Right ventricle myocardium superior (tissue), 1 donor: ENCODE measurements at regions of chr20 and their contacts with region 1.

Region 1: DNA sequence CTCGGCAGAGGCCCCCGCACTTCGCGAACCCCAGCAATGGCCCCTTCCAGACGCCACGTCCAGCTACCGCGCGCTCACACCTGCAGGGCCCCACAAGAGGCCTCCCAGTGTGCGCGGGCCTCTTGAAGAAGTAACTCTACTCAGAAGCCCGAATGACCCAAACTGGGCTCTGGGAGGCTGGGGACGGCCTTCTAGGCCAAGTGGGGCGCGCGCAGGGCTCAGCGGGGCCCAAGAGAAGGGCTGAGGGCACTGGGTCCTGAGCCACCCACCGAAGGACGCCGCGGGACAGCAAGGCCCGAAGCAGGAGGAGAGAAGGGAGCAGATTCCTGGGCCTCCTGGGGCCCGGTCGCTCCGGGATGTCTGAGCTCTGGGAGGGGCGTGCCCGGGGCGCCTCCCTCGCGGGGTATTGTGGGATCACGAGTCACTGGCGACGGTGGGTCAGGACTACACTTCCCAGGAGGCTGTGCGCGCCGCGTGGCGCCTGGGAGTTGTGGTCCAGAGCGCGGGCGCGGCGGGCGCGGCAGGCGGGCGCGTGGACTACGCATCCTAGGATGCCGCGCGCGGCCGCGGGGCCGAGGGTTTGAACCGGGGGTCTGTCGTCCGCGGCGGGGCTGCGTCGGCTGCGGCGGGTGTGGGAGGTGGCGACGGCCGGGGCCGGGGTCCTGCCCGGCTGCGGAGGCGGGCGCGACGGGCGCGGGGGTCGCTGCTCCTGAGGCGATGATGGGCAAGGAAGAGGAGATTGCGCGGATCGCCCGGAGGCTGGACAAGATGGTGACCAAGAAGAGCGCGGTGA is at the start of gene TCEA2:
- DNase-seq: peak; percentile 99
- ATAC-seq: peak; percentile 97
- total RNA-seq, gene TCEA2: 34.6 TPM

Region 2: DNA sequence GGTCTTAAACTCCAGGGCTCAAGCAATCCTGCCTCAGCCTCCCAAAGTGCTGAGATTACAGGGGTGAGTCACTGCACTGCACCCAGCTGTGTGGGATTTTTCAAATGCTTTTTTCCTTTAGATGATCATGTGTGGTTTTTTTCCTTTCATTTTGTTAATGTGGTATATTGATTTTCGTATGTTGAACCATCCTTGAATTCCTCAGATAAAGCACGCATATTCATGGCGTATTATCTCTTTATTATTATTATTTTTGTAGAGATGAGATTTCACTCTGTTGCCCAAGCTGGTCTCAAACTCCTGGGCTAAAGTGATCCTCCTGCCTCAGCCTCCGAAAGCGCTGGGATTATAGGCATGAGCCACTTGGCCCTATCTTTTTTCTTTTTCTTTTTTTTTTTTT is 347.9 kb before region 1 on chr20:
- intact Hi-C with region 1: no loop called
- DNase-seq: no peak
- ATAC-seq: no peak

Region 3: DNA sequence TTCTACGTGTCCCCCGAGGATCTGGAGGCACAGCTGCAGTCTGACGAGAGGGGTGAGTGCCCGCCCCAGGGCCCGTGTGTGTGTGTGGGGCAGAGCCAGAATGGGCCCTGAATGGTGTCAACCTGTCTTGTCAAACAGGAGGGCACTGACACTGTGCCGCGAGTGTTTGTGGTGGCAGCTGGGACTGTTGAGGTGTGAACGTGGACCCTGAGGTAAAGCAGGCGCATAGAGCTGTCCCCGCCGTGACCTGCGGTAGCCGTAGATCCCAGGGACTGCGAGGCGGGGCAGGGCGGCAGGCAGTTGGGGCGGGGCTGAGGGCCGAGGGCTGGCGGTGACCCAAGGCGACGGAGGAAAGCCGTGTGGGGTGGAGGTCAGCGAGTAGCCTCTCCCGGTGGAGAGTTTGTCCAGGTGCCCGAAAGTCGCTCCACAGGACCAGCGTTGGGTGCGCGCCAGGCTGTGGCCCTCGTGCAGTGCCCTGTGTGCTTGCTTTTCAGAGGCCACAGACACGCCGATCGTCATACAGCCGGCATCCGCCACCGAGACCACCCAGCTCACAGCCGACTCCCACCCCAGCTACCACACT is 131.7 kb before region 1 on chr20:
- intact Hi-C with region 1: no loop called
- DNase-seq: peak; percentile 86
- ATAC-seq: peak; percentile 91

Region 4: DNA sequence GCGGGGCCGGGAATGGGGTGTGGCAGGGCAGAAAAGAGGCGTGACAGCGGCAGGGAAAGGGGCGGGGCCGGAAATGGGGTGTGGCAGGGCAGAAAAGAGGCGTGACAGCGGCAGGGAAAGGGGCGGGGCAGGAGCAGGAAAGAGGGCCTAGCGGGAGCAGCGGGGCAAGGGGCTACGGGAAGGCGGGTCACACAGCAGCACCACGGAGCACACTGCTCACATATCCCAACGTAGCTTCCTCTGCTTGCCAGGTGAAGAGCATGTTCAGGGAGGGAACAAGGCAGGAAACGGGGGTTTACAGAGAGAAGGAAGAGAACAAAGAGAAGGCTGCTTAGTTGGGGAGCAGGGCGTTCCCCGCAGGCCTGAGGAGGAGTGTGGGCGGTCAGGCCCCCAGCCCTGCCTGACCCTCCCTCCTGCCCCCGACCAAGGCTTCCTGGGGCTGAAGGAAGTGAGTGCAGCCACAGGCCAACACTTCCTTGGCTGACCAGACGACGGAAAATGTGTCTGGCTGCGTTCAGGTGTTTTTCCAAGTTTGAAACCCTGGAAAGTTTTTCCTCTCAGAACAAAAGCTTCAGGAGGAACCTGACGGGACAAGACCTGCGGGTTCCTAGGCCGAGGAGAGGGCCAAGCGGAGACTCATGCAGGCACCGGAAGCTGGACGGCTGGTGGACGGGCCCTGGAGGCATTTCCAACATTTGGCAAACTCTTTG is 120.4 kb before region 1 on chr20:
- intact Hi-C with region 1: no loop called
- DNase-seq: peak; percentile 67
- ATAC-seq: no peak

Region 5: DNA sequence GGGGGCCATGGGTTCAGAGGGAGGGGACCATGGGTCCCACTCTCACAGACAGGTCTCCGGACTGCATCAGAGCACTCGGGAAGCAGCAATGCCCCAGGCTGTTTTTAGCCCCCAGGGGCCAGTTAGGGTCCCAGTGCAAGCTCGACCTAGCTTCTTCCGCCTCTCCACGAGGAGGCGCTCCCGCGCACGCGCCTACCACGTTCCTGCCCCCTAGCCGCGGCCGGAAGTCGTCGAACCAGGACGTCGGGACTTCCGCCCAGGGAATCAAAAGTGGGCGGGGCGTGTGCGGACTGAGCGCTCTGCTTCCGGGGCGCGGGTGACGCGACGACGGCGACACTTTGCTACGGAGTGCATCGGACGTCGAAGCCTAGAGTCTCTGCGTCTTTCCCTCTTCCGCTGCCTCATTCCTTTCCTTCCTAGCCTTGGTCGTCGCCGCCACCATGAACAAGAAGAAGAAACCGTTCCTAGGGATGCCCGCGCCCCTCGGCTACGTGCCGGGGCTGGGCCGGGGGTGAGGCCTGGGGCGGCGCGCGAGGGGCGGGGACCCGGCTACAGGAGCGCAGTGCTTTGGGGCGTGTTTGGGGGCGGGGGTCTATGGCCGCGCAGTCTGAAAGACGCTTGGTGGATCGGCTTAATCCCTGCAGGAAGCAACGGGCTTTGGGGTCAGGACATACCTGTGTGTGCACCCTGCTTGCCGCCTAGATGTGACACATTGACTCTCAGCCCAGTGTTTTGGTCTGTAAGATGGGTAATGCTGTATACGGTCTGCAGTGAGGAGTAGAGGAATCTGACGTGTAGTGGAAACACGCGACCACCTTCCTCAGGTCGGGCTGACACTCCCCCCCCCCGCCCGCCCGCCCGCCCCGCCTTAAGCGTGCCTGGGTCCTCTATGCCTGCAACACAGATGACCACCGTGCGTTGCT is 81.7 kb before region 1 on chr20 and contains the start of gene PRPF6:
- intact Hi-C with region 1: loop called (anchors 5 kb)
- DNase-seq: peak; percentile 97
- ATAC-seq: peak; percentile 94
- total RNA-seq, gene PRPF6: 45.3 TPM